Activated T-helper 2 cell treated with anti-CD3 and anti-CD28 coated beads, Interferon-gamma antibody, Interleukin-2, Interleukin-4, amounts not matched to agents 10 μg/mL and 5 μg/mL and 100 μg/mL, durations not matched to agents 14 hours and 24 hours and 36 hours (primary cell): ENCODE measurements at regions of chr2 and their contacts with region 1.

Region 1: DNA sequence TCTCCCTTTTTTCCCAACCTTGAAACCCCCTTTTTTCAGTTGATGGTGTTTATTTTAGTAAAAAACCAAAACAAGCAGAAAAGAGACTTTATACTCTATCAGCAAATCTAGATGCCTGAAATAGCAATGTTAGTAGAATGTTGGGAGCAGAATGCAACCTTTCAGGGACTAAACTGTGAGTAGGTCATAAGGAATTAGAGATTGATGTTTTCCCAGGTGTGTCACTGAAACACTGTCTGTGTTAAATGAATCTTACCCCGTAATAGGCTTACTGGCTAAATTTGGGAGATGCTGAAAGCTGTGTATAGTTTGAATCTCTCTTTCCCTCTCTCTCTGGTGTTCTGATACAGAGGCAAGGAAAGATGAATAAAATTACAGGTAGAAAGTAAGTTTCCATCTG is 43.8 kb downstream of the AGFG1 start:
- DNase-seq: no peak
- H3K4me3 Mint-ChIP-seq: no peak overlapping the region
- H3K27ac Mint-ChIP-seq: no peak overlapping the region
- H3K4me1 Mint-ChIP-seq: peaks cover 24% of the 10 kb centered on the region
- H3K27me3 Mint-ChIP-seq: no peaks in the 10 kb centered on the region

Region 2: GRCh38 chr2:227248876-227249275 is 266.9 kb before region 1 on chr2:
- intact Hi-C with region 1: no loop called
- DNase-seq: no peak
- H3K4me3 Mint-ChIP-seq: no peak overlapping the region
- H3K27ac Mint-ChIP-seq: no peak overlapping the region
- H3K4me1 Mint-ChIP-seq: no peaks in the 10 kb centered on the region
- H3K27me3 Mint-ChIP-seq: peaks cover 2% of the 10 kb centered on the region

Region 3: DNA sequence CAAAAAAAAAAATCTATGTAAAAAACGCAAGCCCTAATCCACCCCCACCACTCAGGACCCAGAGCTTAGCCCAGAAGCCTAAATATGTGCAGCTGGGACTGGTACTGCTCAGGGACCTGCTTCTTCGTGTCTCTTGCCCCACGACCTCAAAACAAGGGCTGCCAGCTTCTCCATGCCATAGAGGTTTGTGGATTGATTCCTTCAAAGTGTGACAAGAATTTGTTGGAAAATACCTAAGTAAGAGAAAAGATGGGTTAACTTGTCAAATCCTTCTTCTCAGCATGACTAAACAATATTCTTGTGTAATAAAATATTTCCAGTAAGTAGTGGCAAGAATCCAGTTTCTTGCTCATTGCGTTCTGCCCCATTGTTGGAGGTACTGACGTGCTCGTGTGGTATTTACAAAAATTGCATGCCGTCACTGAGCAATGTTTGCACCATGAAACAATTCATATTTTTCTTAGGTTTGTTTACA is 127.2 kb before region 1 on chr2:
- intact Hi-C with region 1: no loop called
- DNase-seq: no peak
- H3K4me3 Mint-ChIP-seq: no peak overlapping the region
- H3K27ac Mint-ChIP-seq: no peak overlapping the region
- H3K4me1 Mint-ChIP-seq: peaks cover 2% of the 10 kb centered on the region
- H3K27me3 Mint-ChIP-seq: no peaks in the 10 kb centered on the region

Region 4: GRCh38 chr2:227479865-227480475 is 35.8 kb before region 1 on chr2:
- intact Hi-C with region 1: loop called (anchors 5 kb)
- DNase-seq: no peak
- H3K4me3 Mint-ChIP-seq: peak overlapping the region; percentile 41
- H3K27ac Mint-ChIP-seq: peak overlapping the region; percentile 56
- H3K4me1 Mint-ChIP-seq: peaks cover 42% of the 10 kb centered on the region
- H3K27me3 Mint-ChIP-seq: no peaks in the 10 kb centered on the region

Region 5: GRCh38 chr2:227534714-227535113 is 19.0 kb after region 1 on chr2:
- intact Hi-C with region 1: no loop called
- DNase-seq: no peak
- H3K4me3 Mint-ChIP-seq: no peak overlapping the region
- H3K27ac Mint-ChIP-seq: no peak overlapping the region
- H3K4me1 Mint-ChIP-seq: peaks cover 2% of the 10 kb centered on the region
- H3K27me3 Mint-ChIP-seq: no peaks in the 10 kb centered on the region